MCF 10A (cell line): ENCODE measurements at regions of chr6 and their contacts with region 1.

Region 1: GRCh38 chr6:13478525-13478966 is 8.9 kb downstream of the GFOD1 start:
- DNase-seq: no peak
- H3K4me3 Mint-ChIP-seq: no peak overlapping the region
- H3K27ac Mint-ChIP-seq: no peak overlapping the region
- H3K4me1 Mint-ChIP-seq: peaks cover 32% of the 10 kb centered on the region
- H3K27me3 Mint-ChIP-seq: no peaks in the 10 kb centered on the region
- CTCF ChIP-seq: no peak

Region 2: GRCh38 chr6:13395272-13396237 is 83.0 kb before region 1 on chr6:
- CTCF ChIA-PET with region 1: interaction called, 4 read pairs
- POLR2A ChIA-PET with region 1: interaction called, 46 read pairs
- intact Hi-C with region 1: no loop called
- DNase-seq: peak; percentile 75
- H3K4me3 Mint-ChIP-seq: no peak overlapping the region
- H3K27ac Mint-ChIP-seq: peak overlapping the region; percentile 21
- H3K4me1 Mint-ChIP-seq: peaks cover 33% of the 10 kb centered on the region
- H3K27me3 Mint-ChIP-seq: no peaks in the 10 kb centered on the region
- CTCF ChIP-seq: no peak

Region 3: GRCh38 chr6:13407709-13408695 is 70.5 kb before region 1 on chr6:
- CTCF ChIA-PET with region 1: no interaction called
- POLR2A ChIA-PET with region 1: interaction called, 49 read pairs
- intact Hi-C with region 1: no loop called
- DNase-seq: peak; percentile 99
- H3K4me3 Mint-ChIP-seq: peak overlapping the region; percentile 33
- H3K27ac Mint-ChIP-seq: peak overlapping the region; percentile 85
- H3K4me1 Mint-ChIP-seq: peaks cover 52% of the 10 kb centered on the region
- H3K27me3 Mint-ChIP-seq: no peaks in the 10 kb centered on the region
- CTCF ChIP-seq: no peak

Region 4: DNA sequence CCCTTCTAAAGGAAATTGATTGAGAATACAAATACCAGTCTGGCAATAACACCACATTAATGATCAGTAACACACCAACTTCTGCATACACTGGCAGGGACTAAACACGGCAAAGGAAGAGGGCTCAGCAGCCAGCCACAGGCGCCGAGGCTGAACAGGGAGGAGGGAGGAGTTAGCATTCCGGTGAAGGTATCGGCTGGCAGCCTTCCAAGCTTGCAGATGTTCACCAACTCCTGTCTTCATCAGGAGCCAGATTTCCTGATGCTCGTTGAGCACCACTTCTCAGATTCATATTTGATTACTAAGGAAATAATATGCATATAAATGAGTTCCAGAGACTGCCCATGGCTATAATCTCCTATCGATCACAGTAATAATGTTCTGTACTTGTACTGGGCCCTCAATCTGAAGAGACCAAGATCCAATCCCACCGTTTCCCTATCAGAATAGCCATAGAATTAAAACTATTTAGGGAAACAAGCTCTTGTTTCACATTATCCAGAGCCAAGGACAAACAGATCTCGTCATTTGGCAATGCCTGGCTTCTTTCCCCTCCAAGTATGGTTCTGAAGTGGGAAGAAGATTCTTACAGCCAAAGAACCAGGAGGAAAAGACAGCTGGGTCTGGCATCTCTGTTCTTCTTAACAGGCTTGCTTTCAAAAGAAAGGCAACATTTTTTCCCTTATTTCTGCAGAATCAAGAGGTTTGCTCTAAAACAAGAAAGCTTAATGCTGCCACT is 33.4 kb before region 1 on chr6:
- CTCF ChIA-PET with region 1: interaction called, 3 read pairs
- POLR2A ChIA-PET with region 1: interaction called, 16 read pairs
- intact Hi-C with region 1: no loop called
- DNase-seq: peak; percentile 87
- H3K4me3 Mint-ChIP-seq: peak overlapping the region; percentile 18
- H3K27ac Mint-ChIP-seq: no peak overlapping the region
- H3K4me1 Mint-ChIP-seq: peaks cover 21% of the 10 kb centered on the region
- H3K27me3 Mint-ChIP-seq: no peaks in the 10 kb centered on the region
- CTCF ChIP-seq: no peak

Region 5: GRCh38 chr6:13454286-13455221 is 24.0 kb before region 1 on chr6:
- CTCF ChIA-PET with region 1: interaction called, 4 read pairs
- POLR2A ChIA-PET with region 1: interaction called, 11 read pairs
- intact Hi-C with region 1: no loop called
- DNase-seq: no peak
- H3K4me3 Mint-ChIP-seq: no peak overlapping the region
- H3K27ac Mint-ChIP-seq: peak overlapping the region; percentile 74
- H3K4me1 Mint-ChIP-seq: peaks cover 17% of the 10 kb centered on the region
- H3K27me3 Mint-ChIP-seq: no peaks in the 10 kb centered on the region
- CTCF ChIP-seq: no peak